Esophagus muscularis mucosa (tissue), 4 donors: ENCODE measurements at regions of chr14 and their contacts with region 1.

Region 1: DNA sequence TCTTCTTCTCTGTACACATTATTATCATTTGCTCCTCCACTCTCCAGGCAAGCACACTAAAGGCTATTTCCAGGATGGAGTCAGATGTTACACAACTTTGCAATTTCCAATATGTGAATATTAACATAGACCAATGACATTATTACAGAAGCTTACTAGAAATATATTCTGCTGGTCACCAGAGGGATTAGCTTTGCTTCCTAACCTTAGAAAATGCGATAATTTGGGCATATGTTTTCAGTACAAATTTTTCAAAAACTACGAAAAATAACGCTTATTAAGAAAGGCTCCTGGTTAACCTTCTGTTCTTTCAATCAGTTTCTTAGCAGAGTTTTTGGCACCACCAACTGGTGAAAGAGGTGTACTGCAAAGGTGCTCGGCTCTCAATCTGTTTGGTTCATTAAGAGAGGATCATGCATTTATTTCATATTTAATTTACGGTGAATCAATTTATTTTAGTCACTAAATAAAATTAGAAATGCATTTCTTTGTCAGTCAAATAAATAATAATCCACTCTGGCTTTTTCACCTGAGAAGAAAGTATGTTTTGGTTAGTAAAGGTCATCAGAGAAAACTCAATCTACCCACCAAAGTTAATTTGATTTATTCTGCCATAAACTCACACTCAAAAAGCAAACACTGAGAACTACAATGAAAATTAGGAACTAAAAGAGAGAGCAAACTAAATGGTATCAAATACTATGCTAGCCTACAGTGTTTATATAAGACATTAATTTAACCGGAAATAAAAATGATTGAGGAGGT is 39.2 kb downstream of the EFCAB11 start:
- DNase-seq: no peak
- H3K4me3 ChIP-seq: peak overlapping the region in 2 of 4 donors; percentile 13 to 20
- H3K27ac ChIP-seq: peak overlapping the region in 1 of 4 donors; percentile 10
- H3K4me1 ChIP-seq: peaks cover 0 to 44% (median 39%) of the 10 kb centered on the region in 4 donors
- H3K27me3 ChIP-seq: no peaks in the 10 kb centered on the region
- CTCF ChIP-seq: peak; percentile 92 to 96 (median 96)
- EP300 ChIP-seq: no peak
- POLR2A ChIP-seq: no peak

Region 2: DNA sequence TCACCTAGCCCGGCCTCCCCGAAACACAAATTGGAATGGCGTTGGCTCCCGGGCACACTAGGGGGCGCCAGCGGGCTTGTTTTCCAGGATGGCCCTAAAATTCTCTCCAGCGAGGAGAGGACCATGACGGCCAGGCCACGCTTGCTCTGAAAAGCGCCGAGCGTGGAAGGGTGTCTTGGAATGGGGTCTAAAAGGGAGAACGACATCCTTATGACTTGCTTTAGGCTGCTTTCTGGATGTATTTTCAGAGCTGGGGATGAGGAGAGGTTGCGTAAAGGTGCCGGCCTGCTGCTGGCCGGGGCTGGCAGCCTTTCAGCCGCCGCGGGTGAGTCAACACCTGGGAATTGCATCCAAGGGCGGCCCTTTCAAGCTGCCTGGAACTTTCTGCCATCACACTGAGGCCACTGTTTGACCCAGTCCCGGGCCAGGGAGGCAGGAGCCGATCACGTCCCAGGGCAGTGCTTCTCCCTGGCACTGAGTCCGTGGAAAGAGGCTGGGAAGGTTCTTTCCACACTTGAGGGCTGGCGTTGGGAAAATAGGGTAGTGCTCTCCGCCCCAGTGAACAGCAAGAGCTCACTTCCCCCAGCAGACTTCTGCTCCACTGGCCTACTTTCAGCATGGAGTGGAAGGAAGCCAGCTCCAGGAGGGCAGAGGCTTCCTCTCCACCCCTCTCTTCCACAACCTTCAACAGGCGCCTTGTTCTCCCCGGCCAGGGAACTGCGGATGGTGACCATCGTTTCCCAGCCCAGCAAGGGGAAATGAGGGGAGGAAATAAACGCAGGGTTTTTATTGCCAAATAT is 874.6 kb before region 1 on chr14:
- intact Hi-C with region 1: loop called (anchors 5 kb)
- DNase-seq: peak; percentile 94
- H3K4me3 ChIP-seq: peak overlapping the region; percentile 47 to 60 (median 50)
- H3K27ac ChIP-seq: peak overlapping the region; percentile 78 to 91 (median 86)
- H3K4me1 ChIP-seq: peaks cover 10 to 22% (median 16%) of the 10 kb centered on the region in 4 donors
- H3K27me3 ChIP-seq: no peaks in the 10 kb centered on the region
- CTCF ChIP-seq: peak; percentile 92 to 97 (median 94)
- EP300 ChIP-seq: no peak
- POLR2A ChIP-seq: no peak

Region 3: DNA sequence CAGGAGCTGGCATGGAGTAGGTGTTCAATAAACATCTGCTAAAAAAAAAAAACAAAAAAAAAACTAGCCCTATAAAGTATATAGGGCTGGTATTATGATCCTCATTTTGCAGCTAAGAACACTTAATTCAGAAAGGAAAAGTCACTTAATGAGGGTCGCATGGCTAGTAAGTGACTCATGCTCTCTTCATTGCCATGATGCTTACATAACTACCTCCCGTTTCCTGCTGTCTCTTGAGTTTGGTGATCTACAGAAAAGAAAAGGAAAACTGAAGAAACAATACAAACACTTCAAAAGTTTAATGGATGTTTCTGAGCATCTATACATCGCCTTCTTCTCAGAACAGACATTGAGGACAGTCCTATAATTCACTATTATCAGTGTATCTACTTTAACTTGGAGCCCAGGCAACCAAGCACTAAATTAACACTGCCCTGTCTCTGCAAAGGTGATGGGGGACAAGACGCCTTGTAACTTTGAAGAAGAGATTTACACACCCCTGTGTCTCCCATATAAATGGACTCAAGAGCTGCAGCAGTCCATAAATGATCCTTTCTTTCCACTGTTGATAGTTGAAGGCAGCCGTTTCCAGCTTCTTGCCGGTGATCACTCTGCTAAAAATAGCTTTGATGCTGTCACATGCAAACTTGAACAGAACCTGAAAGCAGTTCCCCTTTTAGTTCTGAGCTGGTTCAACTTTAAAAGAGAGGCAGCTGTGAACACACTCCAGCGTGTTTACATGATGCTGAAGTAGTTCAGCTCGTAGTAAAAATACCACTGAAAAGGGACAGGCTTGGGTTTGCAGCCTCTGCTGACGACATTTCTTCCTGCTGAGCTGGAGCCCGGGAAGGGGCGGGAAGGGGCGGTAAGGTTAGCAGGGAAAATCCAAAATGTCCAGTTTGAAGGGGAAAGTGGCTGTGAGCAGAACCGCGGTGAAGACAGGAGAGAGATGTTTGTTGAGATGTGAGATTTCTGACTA is 611.5 kb before region 1 on chr14:
- intact Hi-C with region 1: loop called (anchors 10 kb)
- DNase-seq: no peak
- H3K4me3 ChIP-seq: peak overlapping the region; percentile 12 to 49 (median 28)
- H3K27ac ChIP-seq: peak overlapping the region; percentile 77 to 91 (median 86)
- H3K4me1 ChIP-seq: peaks cover 51 to 68% (median 54%) of the 10 kb centered on the region in 4 donors
- H3K27me3 ChIP-seq: no peaks in the 10 kb centered on the region
- CTCF ChIP-seq: no peak
- EP300 ChIP-seq: peak; percentile 78
- POLR2A ChIP-seq: no peak

Region 4: GRCh38 chr14:89618811-89619551 is 296.3 kb before region 1 on chr14:
- intact Hi-C with region 1: loop called (anchors 5 kb)
- DNase-seq: no peak
- H3K4me3 ChIP-seq: peak overlapping the region; percentile 60 to 93 (median 84)
- H3K27ac ChIP-seq: peak overlapping the region; percentile 73 to 80 (median 78)
- H3K4me1 ChIP-seq: peaks cover 14 to 46% (median 41%) of the 10 kb centered on the region in 4 donors
- H3K27me3 ChIP-seq: no peaks in the 10 kb centered on the region
- CTCF ChIP-seq: peak in 1 of 3 experiments; percentile 17
- EP300 ChIP-seq: no peak
- POLR2A ChIP-seq: no peak

Region 5: DNA sequence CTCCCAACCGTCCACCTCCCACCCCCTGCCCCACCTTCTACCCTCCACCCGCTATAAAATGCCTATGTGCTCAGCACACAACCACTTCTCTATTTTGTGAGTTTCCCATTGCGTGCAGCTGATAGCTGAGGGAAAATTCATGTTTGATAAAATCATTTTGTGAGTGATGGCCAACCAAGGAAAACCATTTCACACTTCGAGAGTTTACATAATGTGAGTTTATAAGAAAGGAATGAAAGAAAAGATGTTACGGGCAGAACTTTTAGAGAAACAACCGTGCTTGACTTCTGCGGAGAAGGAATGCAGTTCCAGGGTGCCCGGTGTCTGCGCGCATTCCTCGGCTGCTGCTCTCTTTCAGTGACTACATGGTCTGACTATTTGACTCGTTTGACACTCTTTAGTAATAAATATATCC is 101.7 kb before region 1 on chr14:
- intact Hi-C with region 1: loop called (anchors 10 kb)
- DNase-seq: no peak
- H3K4me3 ChIP-seq: peak overlapping the region; percentile 4 to 31 (median 28)
- H3K27ac ChIP-seq: peak overlapping the region; percentile 65 to 80 (median 72)
- H3K4me1 ChIP-seq: peaks cover 6 to 27% (median 18%) of the 10 kb centered on the region in 4 donors
- H3K27me3 ChIP-seq: no peaks in the 10 kb centered on the region
- CTCF ChIP-seq: no peak
- EP300 ChIP-seq: no peak
- POLR2A ChIP-seq: no peak

Region 6: GRCh38 chr14:89983375-89983774 is 68.1 kb after region 1 on chr14:
- intact Hi-C with region 1: no loop called
- DNase-seq: no peak
- H3K4me3 ChIP-seq: no peak overlapping the region
- H3K27ac ChIP-seq: no peak overlapping the region
- H3K4me1 ChIP-seq: no peaks in the 10 kb centered on the region
- H3K27me3 ChIP-seq: no peaks in the 10 kb centered on the region
- CTCF ChIP-seq: no peak
- EP300 ChIP-seq: no peak
- POLR2A ChIP-seq: no peak